ENCODE measurements at regions of chr12 and their contacts with region 1.

Region 1: GRCh38 chr12:54431911-54432814 is 13.1 kb upstream of the ITGA5 start:
- DNase-seq: peak; percentile 68
- H3K4me3 Mint-ChIP-seq: no peak overlapping the region
- H3K27ac Mint-ChIP-seq: no peak overlapping the region
- H3K4me1 Mint-ChIP-seq: peaks cover 20% of the 10 kb centered on the region
- H3K27me3 Mint-ChIP-seq: peaks cover 1% of the 10 kb centered on the region

Region 2: GRCh38 chr12:54277823-54278276 is 154.3 kb before region 1 on chr12:
- CTCF ChIA-PET with region 1: no interaction called
- POLR2A ChIA-PET with region 1: no interaction called
- intact Hi-C with region 1: no loop called
- DNase-seq: peak; percentile 42
- H3K4me3 Mint-ChIP-seq: no peak overlapping the region
- H3K27ac Mint-ChIP-seq: no peak overlapping the region
- H3K4me1 Mint-ChIP-seq: peaks cover 51% of the 10 kb centered on the region
- H3K27me3 Mint-ChIP-seq: no peaks in the 10 kb centered on the region

Region 3: DNA sequence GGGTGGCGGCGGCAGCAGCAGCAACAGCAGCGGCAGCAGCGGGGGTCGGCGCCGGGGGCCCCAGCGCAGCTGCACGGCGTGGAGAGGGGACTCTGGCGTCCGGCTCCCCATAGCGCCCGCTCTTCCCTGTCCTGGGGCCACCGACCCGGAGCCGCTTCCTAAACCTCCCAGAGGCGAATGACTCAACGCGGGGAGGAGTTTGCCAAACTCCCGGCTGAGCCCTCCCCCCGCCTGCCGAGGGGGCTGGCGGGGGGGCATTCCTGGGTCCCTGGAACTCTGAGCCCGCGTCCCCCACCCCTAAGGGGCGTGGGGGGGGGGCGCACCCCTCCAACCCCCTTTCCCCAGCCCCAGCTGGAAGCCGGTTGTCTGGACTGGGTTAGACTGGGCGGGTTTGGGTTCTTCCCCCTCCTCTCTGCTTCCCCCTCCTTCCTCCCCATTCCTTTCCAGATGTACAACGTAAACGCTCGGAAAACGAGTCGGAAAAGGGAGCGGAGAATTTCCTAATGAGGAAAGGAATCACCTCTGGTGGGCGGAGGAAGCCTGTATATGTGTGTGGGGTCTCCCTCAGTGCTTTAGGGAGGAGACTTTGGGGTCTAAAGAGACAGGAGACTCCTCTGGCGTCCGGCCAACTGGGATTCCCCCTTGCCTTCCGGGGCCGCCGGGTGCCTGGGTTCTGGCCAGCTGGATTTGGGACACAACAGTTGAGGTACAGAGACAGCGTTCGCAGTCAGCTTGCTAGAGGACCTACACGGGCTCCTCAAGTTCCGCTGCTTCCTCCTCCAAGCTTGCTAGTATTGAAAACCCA is 12.9 kb before region 1 on chr12 and contains the start of gene ITGA5:
- CTCF ChIA-PET with region 1: interaction called, 99 read pairs
- POLR2A ChIA-PET with region 1: interaction called, 12 read pairs
- intact Hi-C with region 1: no loop called
- DNase-seq: peak; percentile 63
- H3K4me3 Mint-ChIP-seq: peak within 1 kb of the TSS; percentile 93
- H3K27ac Mint-ChIP-seq: peak within 1 kb of the TSS; percentile 91
- H3K4me1 Mint-ChIP-seq: peaks cover 45% of the 10 kb centered on the region
- H3K27me3 Mint-ChIP-seq: no peaks in the 10 kb centered on the region
- total RNA-seq, gene ITGA5: 33.8 to 34.9 TPM

Region 4: GRCh38 chr12:54463034-54463433 is 30.9 kb after region 1 on chr12:
- CTCF ChIA-PET with region 1: no interaction called
- POLR2A ChIA-PET with region 1: no interaction called
- intact Hi-C with region 1: no loop called
- DNase-seq: no peak
- H3K4me3 Mint-ChIP-seq: no peak overlapping the region
- H3K27ac Mint-ChIP-seq: no peak overlapping the region
- H3K4me1 Mint-ChIP-seq: peaks cover 7% of the 10 kb centered on the region
- H3K27me3 Mint-ChIP-seq: peaks cover 11% of the 10 kb centered on the region

Measured in activated CD4-positive, alpha-beta memory T cell treated with anti-CD3 and anti-CD28 coated beads for 36 hours (primary cell).